ENCODE measurements at regions of chr18 and their contacts with region 1.

Region 1: GRCh38 chr18:3245853-3246634 is 1.6 kb upstream of the MYL12A start:
- DNase-seq: peak; percentile 87 to 91
- ATAC-seq: peak; percentile 60
- H3K4me3 ChIP-seq: peak overlapping the region; percentile 84 to 98 (median 94)
- H3K27ac ChIP-seq: peak overlapping the region; percentile 99
- H3K4me1 ChIP-seq: peaks cover 23 to 42% of the 10 kb centered on the region in 2 donors
- H3K27me3 ChIP-seq: no peaks in the 10 kb centered on the region
- CTCF ChIP-seq: peak in 4 of 5 experiments; percentile 90 to 98 (median 96)
- POLR2A ChIP-seq: peak in 1 of 2 donors; percentile 8

Region 2: GRCh38 chr18:2758309-2758708 is 487.7 kb before region 1 on chr18:
- in situ Hi-C with region 1: loop called in 1 of 4 experiments (anchors 25 kb)
- intact Hi-C with region 1: no loop called
- DNase-seq: no peak
- ATAC-seq: no peak
- H3K4me3 ChIP-seq: no peak overlapping the region
- H3K27ac ChIP-seq: no peak overlapping the region
- H3K4me1 ChIP-seq: no peaks in the 10 kb centered on the region
- H3K27me3 ChIP-seq: no peaks in the 10 kb centered on the region
- CTCF ChIP-seq: no peak
- POLR2A ChIP-seq: no peak

Region 3: GRCh38 chr18:3012964-3013804 is 232.9 kb before region 1 on chr18 and contains the start of gene LPIN2:
- in situ Hi-C with region 1: loop called in 1 of 4 experiments (anchors 10 kb)
- intact Hi-C with region 1: loop called (anchors 1 kb)
- DNase-seq: peak; percentile 87 to 97
- ATAC-seq: peak; percentile 89 to 93
- H3K4me3 ChIP-seq: peak within 1 kb of the TSS; percentile 62 to 80 (median 70)
- H3K27ac ChIP-seq: peak within 1 kb of the TSS; percentile 60 to 94 (median 78)
- H3K4me1 ChIP-seq: peaks cover 0 to 6% of the 10 kb centered on the region in 2 donors
- H3K27me3 ChIP-seq: no peaks in the 10 kb centered on the region
- CTCF ChIP-seq: peak in 1 of 5 experiments; percentile 9
- POLR2A ChIP-seq: peak; percentile 69 to 81
- total RNA-seq, gene LPIN2: 4.9 to 9.1 (median 8.2) TPM

Region 4: GRCh38 chr18:3162181-3162580 is 83.9 kb before region 1 on chr18:
- in situ Hi-C with region 1: loop called (anchors 5 to 10 kb)
- intact Hi-C with region 1: no loop called
- DNase-seq: peak; percentile 32 to 50
- ATAC-seq: peak; percentile 50 to 67
- H3K4me3 ChIP-seq: no peak overlapping the region
- H3K27ac ChIP-seq: peak overlapping the region; percentile 64 to 74 (median 70)
- H3K4me1 ChIP-seq: no peaks in the 10 kb centered on the region
- H3K27me3 ChIP-seq: no peaks in the 10 kb centered on the region
- CTCF ChIP-seq: no peak
- POLR2A ChIP-seq: no peak

Region 5: DNA sequence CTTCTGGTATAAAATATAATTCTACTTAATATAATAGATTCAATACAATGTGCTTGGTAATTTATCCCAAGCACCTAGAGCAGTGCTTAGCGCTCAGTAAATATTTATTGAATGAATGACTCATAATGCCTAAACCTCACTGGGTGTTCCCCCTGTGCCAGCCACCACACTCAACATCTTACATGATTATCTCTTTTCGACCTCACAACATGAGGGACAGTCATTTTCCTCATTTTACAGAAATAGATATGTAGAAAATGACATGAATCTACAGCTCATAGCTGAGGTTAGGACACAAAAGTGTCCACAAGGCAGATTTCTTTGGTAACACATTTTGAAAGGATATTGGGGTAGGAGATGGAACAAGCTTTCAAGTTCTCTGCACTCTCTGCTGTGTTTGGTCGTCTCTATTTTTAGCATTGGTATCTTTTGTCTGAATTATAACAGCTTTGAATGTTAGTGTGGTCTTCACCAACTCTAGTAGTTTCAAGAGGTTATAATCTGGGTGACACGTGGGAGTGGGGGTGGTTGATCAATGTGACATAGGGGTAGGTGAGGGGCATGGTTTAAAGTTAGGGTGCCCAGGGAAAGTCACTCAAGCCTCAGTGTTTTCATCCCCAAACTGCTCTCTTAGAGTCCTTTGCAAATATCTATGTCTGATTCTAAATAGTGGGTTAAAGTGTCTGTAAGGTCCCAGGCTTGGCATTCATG is 36.0 kb before region 1 on chr18:
- in situ Hi-C with region 1: no loop called
- intact Hi-C with region 1: loop called (anchors 5 kb)
- DNase-seq: no peak
- ATAC-seq: no peak
- H3K4me3 ChIP-seq: no peak overlapping the region
- H3K27ac ChIP-seq: peak overlapping the region; percentile 81 to 90 (median 89)
- H3K4me1 ChIP-seq: peaks cover 65 to 84% of the 10 kb centered on the region in 2 donors
- H3K27me3 ChIP-seq: no peaks in the 10 kb centered on the region
- CTCF ChIP-seq: no peak
- POLR2A ChIP-seq: no peak

Region 6: DNA sequence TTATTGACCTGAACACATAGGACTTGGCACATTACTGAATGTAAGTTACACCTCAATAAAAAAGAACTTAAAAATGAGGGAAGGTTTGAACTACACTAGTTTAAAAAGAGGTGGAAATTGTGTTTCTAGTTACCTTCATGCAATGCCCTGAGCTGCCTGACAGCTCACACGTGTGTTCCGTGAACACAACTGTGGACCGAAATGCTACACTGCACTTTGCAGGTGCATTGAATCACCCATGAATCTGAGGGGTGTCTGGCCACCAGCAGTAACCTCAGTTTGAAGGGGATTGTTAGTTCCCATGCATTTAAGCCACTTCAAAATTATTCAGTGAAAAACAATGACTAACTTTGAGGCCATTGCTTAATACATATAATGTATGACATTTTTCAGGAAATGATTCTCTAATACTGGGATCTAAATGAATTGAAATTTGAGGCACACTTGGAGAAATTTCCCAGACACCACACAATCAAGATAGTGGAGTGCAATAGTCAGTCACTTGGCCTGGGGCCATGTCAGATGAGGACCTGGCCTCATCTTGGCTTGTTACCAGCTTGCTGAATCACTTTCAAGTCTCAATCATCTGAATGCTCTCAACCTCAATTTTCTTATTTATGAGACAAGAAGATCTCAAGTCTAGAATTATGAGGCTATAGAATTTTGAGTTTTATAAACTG is 75.2 kb after region 1 on chr18:
- in situ Hi-C with region 1: no loop called
- intact Hi-C with region 1: no loop called
- DNase-seq: no peak
- ATAC-seq: no peak
- H3K4me3 ChIP-seq: no peak overlapping the region
- H3K27ac ChIP-seq: no peak overlapping the region
- H3K4me1 ChIP-seq: no peaks in the 10 kb centered on the region
- H3K27me3 ChIP-seq: no peaks in the 10 kb centered on the region
- CTCF ChIP-seq: no peak
- POLR2A ChIP-seq: no peak

Region 7: DNA sequence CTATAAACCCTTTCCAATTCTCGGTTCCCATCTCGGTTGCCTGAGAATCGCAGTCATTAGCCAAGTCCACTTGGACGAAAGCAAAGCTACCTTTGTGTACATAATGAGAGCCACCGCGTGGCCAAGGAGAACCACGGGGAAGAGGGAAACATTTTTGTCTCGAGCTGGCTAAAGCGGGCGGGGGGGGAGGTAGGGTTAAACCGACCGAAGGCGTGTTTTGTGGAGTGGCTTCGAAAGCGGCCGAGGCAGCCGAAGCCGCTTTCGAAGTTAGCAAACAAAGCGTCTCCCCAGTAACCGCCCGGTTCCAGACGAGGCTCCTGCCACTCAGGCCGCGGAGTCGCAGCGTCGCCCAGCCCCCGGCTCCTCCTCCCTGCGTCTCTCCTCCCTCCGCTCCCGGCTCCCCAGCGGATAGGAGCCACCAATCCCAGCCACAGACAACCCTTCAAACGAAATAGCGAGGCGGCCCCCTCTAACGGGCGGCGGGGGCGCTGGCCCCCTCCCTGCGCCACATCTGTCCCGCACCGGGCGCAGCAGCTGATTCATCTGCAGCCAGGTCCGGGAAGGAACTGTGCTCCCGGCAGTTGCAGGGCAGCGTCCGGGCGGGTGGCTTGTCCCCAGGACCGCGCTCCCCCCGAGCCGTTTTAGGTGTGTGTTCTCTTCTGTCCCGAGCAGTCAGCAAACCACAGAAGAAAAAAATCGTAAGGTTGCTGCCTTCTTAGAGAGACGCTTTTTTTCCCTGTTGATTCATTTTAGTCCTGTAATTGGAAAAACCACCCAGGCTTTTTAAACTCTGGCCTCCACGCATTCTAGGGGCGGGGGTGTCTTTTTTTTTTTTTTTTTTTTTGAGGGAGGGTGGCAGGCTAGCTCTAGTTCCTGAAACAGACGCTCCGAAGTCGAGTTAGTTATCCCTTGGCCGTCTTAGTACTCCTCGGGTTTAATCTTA is 202.1 kb after region 1 on chr18:
- in situ Hi-C with region 1: no loop called
- intact Hi-C with region 1: loop called (anchors 1 kb)
- DNase-seq: peak; percentile 94 to 95
- ATAC-seq: peak; percentile 55 to 57
- H3K4me3 ChIP-seq: peak overlapping the region; percentile 71 to 97 (median 82)
- H3K27ac ChIP-seq: peak overlapping the region; percentile 98 to 99 (median 99)
- H3K4me1 ChIP-seq: peaks cover 8 to 13% of the 10 kb centered on the region in 2 donors
- H3K27me3 ChIP-seq: no peaks in the 10 kb centered on the region
- CTCF ChIP-seq: peak in 1 of 5 experiments; percentile 7
- POLR2A ChIP-seq: peak; percentile 97 to 98

Measured in gastrocnemius medialis (tissue), 4 donors.